B cell (primary cell): ENCODE measurements at regions of chr5 and their contacts with region 1.

Region 1: GRCh38 chr5:146203011-146203871 is at the start of gene RBM27:
- DNase-seq: peak; percentile 99
- ATAC-seq: peak; percentile 100
- H3K4me3 ChIP-seq: peak within 1 kb of the TSS; percentile 67 to 94 (median 77)
- H3K4me3 Mint-ChIP-seq: no peak within 1 kb of the TSS
- H3K27ac ChIP-seq: peak within 1 kb of the TSS; percentile 75 to 89
- H3K27ac Mint-ChIP-seq: no peak within 1 kb of the TSS
- H3K4me1 ChIP-seq: peaks cover 23 to 28% of the 10 kb centered on the region in 2 donors
- H3K4me1 Mint-ChIP-seq: peaks cover 15% of the 10 kb centered on the region
- H3K27me3 ChIP-seq: no peaks in the 10 kb centered on the region
- H3K27me3 Mint-ChIP-seq: no peaks in the 10 kb centered on the region
- CTCF ChIP-seq: no peak
- total RNA-seq, gene RBM27: 28.7 and 29.8 TPM in 2 replicates

Region 2: DNA sequence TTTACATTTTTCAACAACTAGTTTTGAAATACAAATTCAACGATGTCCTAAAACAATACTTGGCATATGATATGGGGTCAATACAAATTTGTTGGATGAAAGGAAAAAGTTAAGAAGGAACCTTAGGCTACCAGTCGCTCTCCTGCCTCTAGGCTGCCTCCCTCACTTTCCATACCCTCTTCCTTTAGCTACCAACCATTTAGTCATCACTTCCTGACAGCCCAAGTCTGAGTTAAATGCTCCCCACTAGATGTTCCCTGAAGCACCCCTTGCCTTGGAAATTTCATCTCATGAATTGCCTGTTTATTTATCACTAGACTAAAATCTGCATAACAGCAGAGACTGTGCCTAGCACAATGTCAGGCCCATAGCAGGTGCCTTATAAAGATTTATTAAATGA is 18.1 kb before region 1 on chr5:
- CTCF ChIA-PET with region 1: interaction called, 6 read pairs
- POLR2A ChIA-PET with region 1: interaction called, 9 read pairs
- intact Hi-C with region 1: loop called (anchors 1 kb)
- DNase-seq: no peak
- ATAC-seq: no peak
- H3K4me3 ChIP-seq: no peak overlapping the region
- H3K4me3 Mint-ChIP-seq: peak overlapping the region; percentile 32
- H3K27ac ChIP-seq: no peak overlapping the region
- H3K27ac Mint-ChIP-seq: no peak overlapping the region
- H3K4me1 ChIP-seq: peaks cover 5 to 17% of the 10 kb centered on the region in 2 donors
- H3K4me1 Mint-ChIP-seq: peaks cover 12% of the 10 kb centered on the region
- H3K27me3 ChIP-seq: no peaks in the 10 kb centered on the region
- H3K27me3 Mint-ChIP-seq: peaks cover 8% of the 10 kb centered on the region
- CTCF ChIP-seq: no peak

Region 3: DNA sequence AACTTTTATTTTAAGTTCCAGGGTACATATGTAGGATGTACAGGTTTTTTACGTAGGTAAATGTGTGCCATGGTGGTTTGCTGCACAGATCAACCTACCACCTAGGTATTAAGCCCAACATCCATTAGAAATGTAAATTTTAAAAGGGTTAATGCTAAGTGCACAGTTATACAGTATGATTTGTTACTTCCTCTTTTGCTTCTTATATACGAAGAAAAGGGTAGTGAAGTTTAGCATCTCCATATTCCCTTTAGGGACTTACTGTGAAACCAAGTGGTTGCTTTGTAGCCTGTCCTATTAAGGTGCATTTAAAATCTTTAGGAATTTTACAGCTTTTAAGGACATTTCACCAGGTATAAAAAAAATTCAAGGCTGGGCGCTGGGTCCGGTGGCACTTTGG is 46.6 kb after region 1 on chr5:
- CTCF ChIA-PET with region 1: no interaction called
- POLR2A ChIA-PET with region 1: no interaction called
- intact Hi-C with region 1: loop called (anchors 2 kb)
- DNase-seq: peak; percentile 47
- ATAC-seq: peak; percentile 78
- H3K4me3 ChIP-seq: no peak overlapping the region
- H3K4me3 Mint-ChIP-seq: no peak overlapping the region
- H3K27ac ChIP-seq: no peak overlapping the region
- H3K27ac Mint-ChIP-seq: peak overlapping the region; percentile 56
- H3K4me1 ChIP-seq: peaks cover 0 to 10% of the 10 kb centered on the region in 2 donors
- H3K4me1 Mint-ChIP-seq: peaks cover 6% of the 10 kb centered on the region
- H3K27me3 ChIP-seq: no peaks in the 10 kb centered on the region
- H3K27me3 Mint-ChIP-seq: no peaks in the 10 kb centered on the region
- CTCF ChIP-seq: no peak

Region 4: GRCh38 chr5:146446853-146447733 is 243.9 kb after region 1 on chr5 and contains the start of gene TCERG1:
- CTCF ChIA-PET with region 1: no interaction called
- POLR2A ChIA-PET with region 1: no interaction called
- intact Hi-C with region 1: loop called (anchors 1 kb)
- DNase-seq: peak; percentile 100
- ATAC-seq: peak; percentile 89
- H3K4me3 ChIP-seq: peak within 1 kb of the TSS; percentile 41 to 99 (median 93)
- H3K4me3 Mint-ChIP-seq: peak within 1 kb of the TSS; percentile 99
- H3K27ac ChIP-seq: peak within 1 kb of the TSS; percentile 95 to 97
- H3K27ac Mint-ChIP-seq: peak within 1 kb of the TSS; percentile 99
- H3K4me1 ChIP-seq: peaks cover 21 to 23% of the 10 kb centered on the region in 2 donors
- H3K4me1 Mint-ChIP-seq: peaks cover 42% of the 10 kb centered on the region
- H3K27me3 ChIP-seq: no peaks in the 10 kb centered on the region
- H3K27me3 Mint-ChIP-seq: no peaks in the 10 kb centered on the region
- CTCF ChIP-seq: peak; percentile 84
- total RNA-seq, gene TCERG1: 95.2 and 101 TPM in 2 replicates